Lower lobe of right lung (tissue), 2 donors: ENCODE measurements at regions of chr11 and their contacts with region 1.

Region 1: GRCh38 chr11:5123802-5124521 is 14.2 kb downstream of the OR52A5 start:
- DNase-seq: no peak
- ATAC-seq: peak; percentile 81 to 85
- H3K4me3 ChIP-seq: no peak overlapping the region
- H3K27ac ChIP-seq: no peak overlapping the region
- H3K4me1 ChIP-seq: no peaks in the 10 kb centered on the region
- H3K27me3 ChIP-seq: no peaks in the 10 kb centered on the region
- CTCF ChIP-seq: peak; percentile 84

Region 2: DNA sequence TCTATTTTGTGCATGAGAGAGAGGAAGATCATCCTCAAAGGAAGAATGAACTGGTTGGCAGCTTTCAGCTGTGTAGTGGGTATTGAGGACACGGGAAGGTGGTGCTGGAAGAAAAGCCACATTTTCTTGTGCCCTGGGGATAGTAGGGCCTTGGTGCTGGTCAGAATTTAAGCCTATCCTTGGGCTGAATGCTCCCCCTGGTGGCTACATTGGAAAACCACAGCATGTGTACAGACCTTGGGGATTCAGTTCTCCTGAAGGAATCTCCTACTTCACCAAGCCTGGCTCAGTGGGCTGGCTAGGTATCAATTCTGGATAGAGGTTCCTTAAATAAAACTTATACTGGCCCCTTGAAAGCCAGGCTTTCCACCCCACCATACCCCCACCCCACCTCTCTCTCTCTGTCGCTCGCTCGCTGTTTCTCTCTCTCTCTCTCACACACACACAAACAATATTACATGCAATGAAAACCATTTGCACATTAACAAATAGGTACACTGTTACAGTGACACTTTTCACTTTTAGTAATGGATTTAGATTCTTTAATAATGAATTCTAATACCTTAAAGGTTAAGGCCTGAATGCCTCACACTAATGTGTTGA is 256.9 kb after region 1 on chr11:
- intact Hi-C with region 1: loop called (anchors 5 kb)
- DNase-seq: no peak
- ATAC-seq: peak; percentile 75 to 82
- H3K4me3 ChIP-seq: no peak overlapping the region
- H3K27ac ChIP-seq: no peak overlapping the region
- H3K4me1 ChIP-seq: no peaks in the 10 kb centered on the region
- H3K27me3 ChIP-seq: no peaks in the 10 kb centered on the region
- CTCF ChIP-seq: peak; percentile 65